ENCODE measurements at regions of chr11 and their contacts with region 1.

Region 1: GRCh38 chr11:114180301-114181055 is 115.7 kb upstream of the NNMT start:
- DNase-seq: peak in 5 of 10 donors; percentile 20 to 67 (median 43)
- ATAC-seq: peak in 1 of 2 donors; percentile 47
- H3K4me3 Mint-ChIP-seq: peak overlapping the region in 8 of 10 donors; percentile 29 to 66 (median 42)
- H3K27ac Mint-ChIP-seq: peak overlapping the region; percentile 36 to 93 (median 70)
- H3K4me1 Mint-ChIP-seq: peaks cover 46 to 94% (median 84%) of the 10 kb centered on the region in 4 donors
- H3K27me3 Mint-ChIP-seq: no peaks in the 10 kb centered on the region

Region 2: GRCh38 chr11:114148013-114148382 is 32.5 kb before region 1 on chr11:
- POLR2A ChIA-PET with region 1: no interaction called
- DNase-seq: no peak
- ATAC-seq: no peak
- H3K4me3 Mint-ChIP-seq: no peak overlapping the region
- H3K27ac Mint-ChIP-seq: peak overlapping the region in 2 of 10 donors; percentile 45 to 70
- H3K4me1 Mint-ChIP-seq: peaks cover 26 to 80% (median 34%) of the 10 kb centered on the region in 4 donors
- H3K27me3 Mint-ChIP-seq: no peaks in the 10 kb centered on the region

Region 3: DNA sequence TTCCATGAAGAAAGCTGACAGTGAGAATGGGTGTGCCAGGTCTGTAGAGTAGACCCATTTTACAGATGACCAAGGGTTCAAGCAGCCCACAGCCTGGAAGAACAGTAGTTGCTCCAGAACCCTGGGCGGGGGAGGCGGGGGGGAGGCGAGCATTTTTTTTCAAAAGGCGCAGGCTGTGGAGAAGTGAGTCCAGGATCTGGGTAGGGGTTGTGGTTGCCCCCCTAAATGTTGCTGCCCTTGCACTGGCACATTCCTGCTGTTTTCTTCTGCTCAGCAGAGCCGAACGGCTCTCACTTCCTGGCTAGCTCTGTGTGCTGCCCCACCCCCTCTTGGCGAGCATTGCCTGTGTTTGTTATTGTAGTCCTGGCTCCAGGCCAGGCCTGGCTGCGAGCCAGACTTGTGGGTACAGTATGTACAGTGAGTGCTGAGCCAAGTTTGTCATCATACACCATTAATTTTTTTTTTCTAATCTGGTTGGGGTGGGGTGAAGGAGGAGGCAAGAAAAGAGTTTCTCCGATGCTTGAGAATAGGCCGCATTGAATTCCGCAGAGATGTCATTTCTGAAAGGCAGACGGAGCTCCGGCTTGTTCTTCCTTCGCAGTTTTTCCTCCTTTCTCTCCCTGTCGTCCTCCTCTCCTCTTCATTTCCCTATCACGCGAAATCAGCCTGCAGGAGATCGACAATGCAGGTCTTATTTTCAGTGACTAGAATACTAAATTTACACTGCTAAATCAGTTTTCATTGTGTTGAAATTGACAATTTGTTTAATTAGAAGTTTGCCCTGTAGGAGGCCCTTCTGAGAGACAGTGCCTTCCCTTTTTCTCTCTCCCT is 20.5 kb before region 1 on chr11:
- POLR2A ChIA-PET with region 1: interaction called, 178 read pairs
- DNase-seq: peak; percentile 93 to 99 (median 98)
- ATAC-seq: peak; percentile 95 to 96
- H3K4me3 Mint-ChIP-seq: peak overlapping the region; percentile 50 to 80 (median 74)
- H3K27ac Mint-ChIP-seq: peak overlapping the region; percentile 72 to 97 (median 96)
- H3K4me1 Mint-ChIP-seq: peaks cover 51 to 97% (median 95%) of the 10 kb centered on the region in 4 donors
- H3K27me3 Mint-ChIP-seq: no peaks in the 10 kb centered on the region

Region 4: DNA sequence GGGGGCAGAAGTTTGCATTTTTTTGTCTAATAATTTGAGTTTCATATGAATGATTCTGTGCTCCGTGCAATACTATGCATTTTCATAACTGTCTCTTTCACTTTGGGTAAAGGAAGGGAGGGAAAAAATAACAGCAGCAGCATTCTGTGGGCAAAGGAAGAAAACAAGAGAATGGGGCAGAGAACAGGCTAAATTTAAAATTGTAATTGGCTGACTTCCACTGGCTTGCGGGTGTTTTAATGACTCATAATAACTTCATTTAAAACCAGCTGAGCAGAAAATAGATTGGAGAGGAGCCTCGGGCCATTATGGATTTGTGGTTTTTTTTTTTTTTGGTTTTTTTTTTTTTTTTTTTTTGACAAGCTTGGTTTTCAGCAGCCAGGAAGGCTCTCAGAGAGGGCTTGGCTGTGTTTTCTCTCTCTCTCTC is 13.6 kb before region 1 on chr11:
- POLR2A ChIA-PET with region 1: interaction called, 178 read pairs
- DNase-seq: peak in 3 of 10 donors; percentile 32 to 68 (median 55)
- ATAC-seq: peak; percentile 56 to 71
- H3K4me3 Mint-ChIP-seq: peak overlapping the region; percentile 55 to 79 (median 67)
- H3K27ac Mint-ChIP-seq: peak overlapping the region; percentile 35 to 97 (median 80)
- H3K4me1 Mint-ChIP-seq: peaks cover 59 to 99% (median 99%) of the 10 kb centered on the region in 4 donors
- H3K27me3 Mint-ChIP-seq: no peaks in the 10 kb centered on the region

Region 5: DNA sequence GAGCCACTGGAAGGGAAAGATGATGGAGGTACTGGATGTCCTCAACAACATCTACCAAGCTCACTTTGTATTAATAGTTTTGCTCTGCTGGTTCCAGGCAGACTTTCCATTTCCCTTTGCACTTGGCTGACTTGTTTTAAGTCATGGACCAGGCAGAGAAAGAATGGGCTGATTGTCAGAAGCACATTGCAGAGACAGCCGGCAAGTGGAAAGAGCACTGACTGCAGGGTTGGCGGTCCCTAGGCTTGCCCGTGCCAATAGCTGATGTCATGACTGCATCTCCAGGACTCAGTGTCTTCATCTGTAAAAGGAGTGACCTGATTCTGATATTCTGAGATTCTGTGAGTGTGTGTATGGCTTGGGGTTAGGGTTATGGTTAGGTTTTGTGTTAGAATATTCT is 94.8 kb after region 1 on chr11:
- POLR2A ChIA-PET with region 1: no interaction called
- DNase-seq: no peak
- ATAC-seq: no peak
- H3K4me3 Mint-ChIP-seq: no peak overlapping the region
- H3K27ac Mint-ChIP-seq: no peak overlapping the region
- H3K4me1 Mint-ChIP-seq: peaks cover 0 to 2% (median under 1%) of the 10 kb centered on the region in 4 donors
- H3K27me3 Mint-ChIP-seq: peaks cover 31 to 82% (median 62%) of the 10 kb centered on the region in 5 donors